ENCODE measurements at regions of chr21 and their contacts with region 1.

Region 1: GRCh38 chr21:32382108-32382644 is 10.6 kb downstream of the URB1 start:
- DNase-seq: no peak
- H3K4me3 ChIP-seq: no peak overlapping the region
- CTCF ChIP-seq: no peak
- POLR2A ChIP-seq: no peak

Region 2: GRCh38 chr21:32233055-32233546 is 149.1 kb before region 1 on chr21:
- intact Hi-C with region 1: no loop called
- DNase-seq: no peak
- H3K4me3 ChIP-seq: no peak overlapping the region
- CTCF ChIP-seq: no peak
- POLR2A ChIP-seq: no peak

Region 3: GRCh38 chr21:32403201-32403777 is 21.1 kb after region 1 on chr21:
- intact Hi-C with region 1: no loop called
- DNase-seq: peak in 1 of 2 donors; percentile 56
- H3K4me3 ChIP-seq: no peak overlapping the region
- CTCF ChIP-seq: peak in 1 of 3 donors; percentile 30
- POLR2A ChIP-seq: no peak

Region 4: GRCh38 chr21:32448803-32449594 is 66.8 kb after region 1 on chr21:
- intact Hi-C with region 1: no loop called
- DNase-seq: no peak
- H3K4me3 ChIP-seq: no peak overlapping the region
- CTCF ChIP-seq: no peak
- POLR2A ChIP-seq: no peak

Region 5: DNA sequence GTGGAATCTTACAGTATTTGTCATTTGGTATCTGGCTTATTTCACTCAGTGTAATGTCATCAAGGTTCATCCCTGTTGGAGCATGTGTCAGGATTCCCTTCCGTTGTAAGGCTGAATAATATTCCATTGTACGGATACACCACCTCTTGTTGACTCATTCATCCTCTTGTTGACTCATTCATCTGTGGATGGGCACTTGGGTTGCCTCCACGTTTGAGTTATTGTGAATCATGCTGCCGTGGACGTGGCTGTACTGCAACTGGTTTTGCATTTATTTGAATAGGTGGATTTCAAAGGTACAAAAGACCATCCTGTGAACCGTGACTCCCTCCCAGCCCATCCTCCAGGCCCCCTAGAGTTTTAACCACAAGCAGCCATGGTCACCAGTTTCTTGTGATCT is 215.0 kb after region 1 on chr21:
- intact Hi-C with region 1: loop called (anchors 10 kb)
- DNase-seq: no peak
- H3K4me3 ChIP-seq: no peak overlapping the region
- CTCF ChIP-seq: no peak
- POLR2A ChIP-seq: no peak

Measured in lower leg skin (tissue), 4 donors.